ENCODE measurements at regions of chr5 and their contacts with region 1.

Region 1: GRCh38 chr5:149596713-149597112 is 15.4 kb downstream of the ARHGEF37 start:
- DNase-seq: no peak
- H3K4me3 ChIP-seq: no peak overlapping the region
- H3K27ac ChIP-seq: peak overlapping the region; percentile 11 to 68 (median 34)
- H3K4me1 ChIP-seq: peaks cover 20 to 35% (median 34%) of the 10 kb centered on the region in 4 donors
- H3K27me3 ChIP-seq: no peaks in the 10 kb centered on the region
- CTCF ChIP-seq: no peak
- EP300 ChIP-seq: no peak
- POLR2A ChIP-seq: no peak

Region 2: GRCh38 chr5:149799119-149799623 is 202.5 kb after region 1 on chr5:
- intact Hi-C with region 1: no loop called
- DNase-seq: peak; percentile 94
- H3K4me3 ChIP-seq: no peak overlapping the region
- H3K27ac ChIP-seq: peak overlapping the region; percentile 86 to 92 (median 90)
- H3K4me1 ChIP-seq: peaks cover 87 to 98% (median 94%) of the 10 kb centered on the region in 4 donors
- H3K27me3 ChIP-seq: no peaks in the 10 kb centered on the region
- CTCF ChIP-seq: no peak
- EP300 ChIP-seq: no peak
- POLR2A ChIP-seq: no peak

Region 3: DNA sequence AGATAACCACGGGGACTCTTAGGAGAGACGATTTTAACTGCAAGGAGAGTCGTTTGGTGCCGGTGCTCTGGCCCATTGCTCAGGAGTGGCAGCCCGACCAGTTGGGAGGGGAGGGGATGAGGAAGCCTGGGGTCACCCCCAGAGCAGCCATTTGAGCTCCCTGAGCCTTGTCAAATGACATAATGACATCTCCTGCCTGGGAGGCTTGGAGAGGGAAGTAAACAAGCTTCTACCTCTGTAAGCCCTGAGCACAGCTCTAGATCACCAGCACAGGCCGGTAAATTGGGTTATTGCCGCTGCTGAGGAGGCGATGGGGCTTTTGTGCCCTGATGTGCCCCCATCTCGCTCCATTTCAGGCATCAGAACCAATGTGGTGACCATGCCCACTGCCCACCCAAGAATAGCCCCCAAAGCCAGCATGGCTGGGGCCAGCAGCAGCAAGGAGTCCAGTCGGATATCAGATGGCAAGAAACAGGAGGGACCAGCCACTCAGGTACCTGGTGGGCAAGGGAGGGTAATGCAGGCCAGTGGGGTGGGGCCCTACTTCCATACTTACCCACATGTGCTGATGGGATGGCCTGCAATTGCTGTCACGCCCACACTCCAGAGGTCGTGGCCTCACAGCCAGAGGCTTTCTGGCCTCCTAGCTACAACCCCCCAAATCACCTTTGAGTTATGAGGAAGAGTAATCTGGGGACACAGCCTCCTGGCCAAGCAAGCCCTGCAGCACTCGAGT is 793.0 kb after region 1 on chr5:
- intact Hi-C with region 1: loop called (anchors 10 kb)
- DNase-seq: no peak
- H3K4me3 ChIP-seq: no peak overlapping the region
- H3K27ac ChIP-seq: no peak overlapping the region
- H3K4me1 ChIP-seq: no peaks in the 10 kb centered on the region
- H3K27me3 ChIP-seq: no peaks in the 10 kb centered on the region
- CTCF ChIP-seq: no peak
- EP300 ChIP-seq: no peak
- POLR2A ChIP-seq: no peak

Measured in esophagus muscularis mucosa (tissue), 4 donors.